AG04450 (cell line): ENCODE measurements at regions of chr10 and their contacts with region 1.

Region 1: DNA sequence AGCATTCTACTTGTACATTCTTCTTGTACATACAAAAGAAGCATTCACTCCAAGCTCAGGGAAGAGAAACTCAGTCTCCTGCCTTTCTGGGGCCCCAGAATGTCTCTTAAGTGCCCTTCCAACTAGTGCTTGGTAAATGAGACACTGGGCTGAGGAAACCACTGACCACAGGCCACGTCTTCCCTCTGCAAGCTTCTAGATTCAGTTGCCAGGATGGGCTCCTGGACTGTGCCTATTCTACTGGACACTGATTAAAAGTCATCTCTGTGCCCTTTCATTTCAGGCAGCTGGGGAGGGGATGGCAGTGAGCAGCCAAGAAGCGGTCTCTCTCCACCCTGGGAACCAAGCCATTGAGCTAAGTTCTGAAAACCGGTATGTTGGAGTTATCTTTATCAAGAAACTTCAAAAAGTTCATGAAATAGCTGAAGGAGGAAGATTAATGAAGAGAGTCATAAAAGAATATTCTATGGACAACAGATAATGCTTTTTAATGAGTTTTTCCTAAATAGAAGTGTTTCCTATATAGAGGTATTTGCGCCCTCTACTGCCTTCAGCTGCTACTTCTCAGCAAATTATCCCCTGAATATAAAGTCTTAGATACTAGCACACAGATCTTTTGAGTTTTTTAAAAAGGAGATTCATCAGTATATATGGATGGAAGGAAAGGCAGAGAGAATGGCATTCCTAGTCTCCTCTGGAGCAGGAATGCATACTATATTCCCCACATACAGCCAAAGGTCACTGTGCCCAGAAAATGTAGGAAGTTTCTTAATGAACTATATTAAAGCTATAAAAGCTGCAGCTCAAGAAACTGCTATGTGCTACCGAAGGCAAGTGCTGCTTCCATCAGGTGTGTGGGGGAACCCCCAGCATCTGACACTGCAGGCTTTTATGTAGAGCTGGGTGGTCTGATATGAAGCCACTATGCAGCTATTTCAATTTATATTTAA is 8.4 kb upstream of the IFIT1B start:
- DNase-seq: no peak
- H3K4me3 ChIP-seq: no peak overlapping the region
- H3K27ac ChIP-seq: no peak overlapping the region
- H3K27me3 ChIP-seq: no peaks in the 10 kb centered on the region
- CTCF ChIP-seq: peak; percentile 69

Region 2: GRCh38 chr10:89269433-89270152 is 99.8 kb before region 1 on chr10:
- CTCF ChIA-PET with region 1: interaction called, 13 read pairs
- POLR2A ChIA-PET with region 1: no interaction called
- DNase-seq: no peak
- H3K4me3 ChIP-seq: no peak overlapping the region
- H3K27ac ChIP-seq: no peak overlapping the region
- H3K27me3 ChIP-seq: no peaks in the 10 kb centered on the region
- CTCF ChIP-seq: no peak

Region 3: GRCh38 chr10:89327784-89328441 is 41.5 kb before region 1 on chr10 and contains the start of gene IFIT3:
- CTCF ChIA-PET with region 1: interaction called, 18 read pairs
- POLR2A ChIA-PET with region 1: no interaction called
- DNase-seq: peak; percentile 91
- H3K4me3 ChIP-seq: peak within 1 kb of the TSS; percentile 67
- H3K27ac ChIP-seq: peak within 1 kb of the TSS; percentile 97
- H3K27me3 ChIP-seq: no peaks in the 10 kb centered on the region
- CTCF ChIP-seq: no peak
- polyA plus RNA-seq, gene IFIT3: 6.3 and 8.7 TPM in 2 replicates

Region 4: GRCh38 chr10:89391917-89392756 is 22.7 kb after region 1 on chr10 and contains the start of gene IFIT1:
- CTCF ChIA-PET with region 1: interaction called, 17 read pairs
- POLR2A ChIA-PET with region 1: interaction called, 9 read pairs
- DNase-seq: peak; percentile 85
- H3K4me3 ChIP-seq: peak within 1 kb of the TSS; percentile 75
- H3K27ac ChIP-seq: peak within 1 kb of the TSS; percentile 81
- H3K27me3 ChIP-seq: no peaks in the 10 kb centered on the region
- CTCF ChIP-seq: no peak
- polyA plus RNA-seq, gene IFIT1: 24.3 and 32.8 TPM in 2 replicates

Region 5: DNA sequence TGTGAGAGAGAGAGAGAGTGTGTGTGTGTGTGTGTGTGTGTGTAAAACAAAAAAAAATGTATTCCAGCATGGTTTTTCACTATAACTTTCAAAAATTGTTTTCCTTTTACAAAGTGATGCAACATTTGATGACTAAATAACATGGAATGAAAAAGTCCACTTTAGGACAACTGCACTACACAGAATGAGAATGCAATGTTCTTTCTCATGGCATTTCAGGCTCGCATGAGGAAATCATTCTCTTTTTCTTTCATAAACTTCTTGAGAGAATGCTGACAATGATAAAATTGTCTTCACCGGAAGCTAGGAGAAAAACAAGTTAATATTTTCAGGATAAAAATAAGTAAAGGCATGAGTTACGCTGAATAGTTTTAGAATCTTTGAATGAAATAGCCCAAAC is 112.2 kb after region 1 on chr10:
- CTCF ChIA-PET with region 1: no interaction called
- POLR2A ChIA-PET with region 1: no interaction called
- DNase-seq: peak; percentile 65
- H3K4me3 ChIP-seq: no peak overlapping the region
- H3K27ac ChIP-seq: no peak overlapping the region
- H3K27me3 ChIP-seq: no peaks in the 10 kb centered on the region
- CTCF ChIP-seq: no peak